Adrenal gland (tissue), 19 donors: ENCODE measurements at regions of chr7 and their contacts with region 1.

Region 1: DNA sequence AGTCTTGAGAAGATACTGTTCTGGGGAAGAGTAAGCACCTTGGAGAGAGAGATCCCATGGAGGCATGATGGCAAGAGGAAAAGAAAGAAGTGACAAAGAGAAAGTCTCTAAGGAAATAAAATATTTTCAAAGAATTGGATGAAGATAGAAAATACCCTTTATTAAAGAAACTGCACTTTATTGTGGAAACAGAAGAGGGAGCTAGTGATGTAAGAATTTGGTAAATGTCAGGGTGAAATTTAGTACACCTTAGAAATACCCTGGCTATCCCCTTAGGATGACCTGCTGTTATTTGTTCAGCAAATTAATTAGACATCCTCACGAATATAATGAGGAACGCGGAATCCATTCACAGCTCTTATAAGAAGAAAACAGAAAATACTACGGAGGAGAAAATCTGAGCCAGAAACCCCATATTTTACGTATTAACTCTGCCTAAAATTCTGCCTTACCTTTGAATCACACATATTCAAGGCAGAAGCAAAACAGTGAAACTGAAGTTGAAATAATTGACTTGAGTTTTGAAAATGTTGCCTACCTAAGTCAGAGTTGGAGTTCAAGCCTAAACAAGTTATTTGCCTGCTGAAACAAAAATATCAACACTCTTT is 90.7 kb downstream of the TFPI2 start:
- DNase-seq: no peak
- H3K4me3 ChIP-seq: no peak overlapping the region
- H3K27ac ChIP-seq: no peak overlapping the region
- H3K4me1 ChIP-seq: no peaks in the 10 kb centered on the region
- H3K27me3 ChIP-seq: no peaks in the 10 kb centered on the region
- CTCF ChIP-seq: peak; percentile 27 to 66 (median 51)
- POLR2A ChIP-seq: no peak

Region 2: GRCh38 chr7:93178212-93178611 is 621.6 kb before region 1 on chr7:
- intact Hi-C with region 1: no loop called
- DNase-seq: no peak
- H3K4me3 ChIP-seq: no peak overlapping the region
- H3K27ac ChIP-seq: no peak overlapping the region
- H3K4me1 ChIP-seq: no peaks in the 10 kb centered on the region
- H3K27me3 ChIP-seq: no peaks in the 10 kb centered on the region
- CTCF ChIP-seq: peak in 2 of 6 experiments; percentile 23 to 27
- POLR2A ChIP-seq: no peak

Region 3: GRCh38 chr7:93629292-93629801 is 170.5 kb before region 1 on chr7:
- intact Hi-C with region 1: no loop called
- DNase-seq: no peak
- H3K4me3 ChIP-seq: no peak overlapping the region
- H3K27ac ChIP-seq: no peak overlapping the region
- H3K4me1 ChIP-seq: no peaks in the 10 kb centered on the region
- H3K27me3 ChIP-seq: no peaks in the 10 kb centered on the region
- CTCF ChIP-seq: no peak
- POLR2A ChIP-seq: no peak

Region 4: DNA sequence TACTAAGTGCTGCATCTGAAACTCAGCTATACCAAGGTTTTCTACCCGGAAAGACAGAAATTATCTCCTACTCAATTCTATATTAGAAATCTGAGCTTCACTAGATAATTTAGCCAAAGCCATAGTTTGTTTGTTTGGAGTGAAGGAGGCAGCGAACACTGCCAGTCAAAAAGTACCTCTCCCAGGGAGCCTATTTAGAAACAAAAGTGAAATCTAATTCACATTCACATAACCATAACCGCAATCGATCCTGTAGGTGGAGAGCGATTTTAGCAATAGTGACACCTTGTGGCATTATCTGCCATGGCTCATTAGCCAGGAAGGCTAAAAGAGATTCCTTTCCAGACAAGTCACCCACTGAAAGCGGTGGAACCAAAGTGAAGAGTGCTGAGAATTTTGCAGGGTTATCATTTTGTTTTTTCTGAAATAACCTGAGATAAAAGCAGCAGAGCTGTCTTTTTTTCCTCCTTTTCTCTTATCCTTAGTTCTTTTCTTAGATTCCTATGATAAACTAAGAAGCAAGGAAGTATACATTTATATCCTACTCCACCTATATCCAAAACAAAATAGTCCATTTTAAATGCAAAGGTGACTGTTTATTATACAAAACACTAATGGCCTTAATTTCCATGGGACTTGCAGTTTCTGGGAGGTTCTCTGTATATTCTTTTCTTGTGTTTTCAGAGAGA is 288.0 kb after region 1 on chr7:
- intact Hi-C with region 1: loop called in 1 of 2 experiments (anchors 10 kb)
- DNase-seq: peak; percentile 29 to 76 (median 56)
- H3K4me3 ChIP-seq: peak overlapping the region in 2 of 4 donors; percentile 2 to 49
- H3K27ac ChIP-seq: no peak overlapping the region
- H3K4me1 ChIP-seq: peaks cover 9 to 13% of the 10 kb centered on the region in 2 donors
- H3K27me3 ChIP-seq: no peaks in the 10 kb centered on the region
- CTCF ChIP-seq: peak; percentile 59 to 80 (median 76)
- POLR2A ChIP-seq: no peak